Activated naive CD4-positive, alpha-beta T cell treated with anti-CD3 and anti-CD28 coated beads for 36 hours (primary cell): ENCODE measurements at regions of chr17 and their contacts with region 1.

Region 1: DNA sequence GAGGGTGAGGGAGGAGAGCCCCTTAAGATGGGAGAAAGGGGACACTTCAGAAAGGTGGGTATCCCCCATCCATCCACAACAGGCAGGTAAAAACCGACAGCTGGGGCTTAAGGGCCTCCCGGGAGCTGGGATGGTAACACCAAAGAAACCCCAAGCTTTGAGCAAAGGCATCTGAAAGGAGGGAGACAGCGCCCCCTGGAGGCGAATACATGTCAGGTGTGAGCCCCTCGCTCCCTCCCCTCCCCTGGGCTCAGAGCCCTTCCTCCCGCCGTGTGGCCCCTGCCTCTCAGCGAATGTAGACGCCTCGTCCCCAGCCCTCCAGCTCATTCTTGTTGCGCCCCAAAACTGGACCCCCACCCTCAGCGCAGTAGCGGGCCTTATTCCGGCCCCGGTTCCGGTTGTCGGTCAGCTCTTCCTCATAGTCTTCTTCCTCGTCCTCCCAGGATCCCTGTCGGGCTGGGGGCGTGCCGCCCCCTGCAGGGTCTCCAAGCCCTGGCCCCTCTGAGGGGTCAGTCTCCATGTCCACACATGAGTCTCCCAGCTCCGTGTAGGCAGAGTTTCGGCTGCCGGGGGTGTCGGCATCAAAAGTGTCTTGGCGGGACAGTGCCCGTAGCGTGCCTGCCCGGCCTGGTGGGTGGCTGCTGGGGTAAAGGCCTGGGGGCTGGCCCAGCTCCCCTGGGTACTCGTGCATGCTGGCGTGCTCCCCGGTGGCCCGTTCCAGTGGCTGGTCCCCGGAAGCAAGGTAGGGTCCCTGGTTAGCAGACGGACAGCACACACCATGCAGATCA is 9.1 kb upstream of the ARL5C start:
- DNase-seq: peak; percentile 85
- H3K4me3 Mint-ChIP-seq: no peak overlapping the region
- H3K27ac Mint-ChIP-seq: no peak overlapping the region
- H3K4me1 Mint-ChIP-seq: peaks cover 4% of the 10 kb centered on the region
- H3K27me3 Mint-ChIP-seq: no peaks in the 10 kb centered on the region

Region 2: DNA sequence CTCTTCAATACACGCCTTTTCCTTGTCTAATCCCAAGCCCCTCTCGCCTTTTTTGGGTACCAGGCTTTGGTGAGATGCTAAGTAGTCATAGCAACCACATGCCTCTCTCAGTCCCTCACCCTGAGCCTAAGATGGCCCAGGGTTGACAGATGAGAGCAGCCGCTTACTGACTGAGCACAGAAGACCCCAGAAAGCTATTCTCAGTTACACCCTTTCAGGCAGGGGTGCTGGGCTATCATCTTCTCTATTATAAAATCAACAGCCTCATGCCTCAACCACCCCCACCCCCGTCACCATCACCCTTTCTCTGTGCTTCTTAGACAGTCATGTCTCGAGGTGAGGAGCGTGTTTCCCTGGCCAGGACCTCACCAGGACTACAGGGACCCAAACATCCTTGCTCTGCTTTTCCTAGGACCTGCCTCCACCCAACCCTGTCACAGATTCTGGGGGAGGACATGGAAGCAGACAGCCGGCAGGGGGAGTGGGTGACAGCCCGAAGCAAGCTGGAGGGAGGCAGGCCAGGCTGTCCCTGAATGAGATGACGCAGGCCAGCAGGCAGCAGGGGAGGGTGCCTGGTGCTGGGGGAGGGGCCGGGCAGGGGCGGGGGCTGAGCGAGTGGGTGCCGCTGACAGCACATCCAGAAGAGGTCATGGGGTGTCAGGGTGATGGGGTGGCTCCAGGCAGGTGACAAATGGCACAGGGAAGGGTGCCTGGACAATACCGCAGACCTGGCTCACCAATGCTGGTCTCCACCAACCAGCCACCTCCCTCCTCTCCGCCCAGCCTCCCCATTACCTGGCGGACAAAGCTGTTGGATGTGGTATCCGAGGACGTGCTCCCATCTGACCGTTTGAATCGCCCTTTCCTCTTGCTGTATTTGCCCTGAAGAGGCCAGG is 19.2 kb after region 1 on chr17:
- CTCF ChIA-PET with region 1: interaction called, 12 read pairs
- intact Hi-C with region 1: no loop called
- DNase-seq: no peak
- H3K4me3 Mint-ChIP-seq: no peak overlapping the region
- H3K27ac Mint-ChIP-seq: no peak overlapping the region
- H3K4me1 Mint-ChIP-seq: peaks cover 22% of the 10 kb centered on the region
- H3K27me3 Mint-ChIP-seq: no peaks in the 10 kb centered on the region